ENCODE measurements at regions of chr19 and their contacts with region 1.

Region 1: GRCh38 chr19:48333467-48334384 is 8.4 kb downstream of the EMP3 start:
- DNase-seq: peak; percentile 97
- ATAC-seq: peak; percentile 76
- H3K4me3 Mint-ChIP-seq: peak overlapping the region; percentile 96
- H3K27ac Mint-ChIP-seq: peak overlapping the region; percentile 93
- H3K4me1 Mint-ChIP-seq: peaks cover 46% of the 10 kb centered on the region
- H3K27me3 Mint-ChIP-seq: no peaks in the 10 kb centered on the region

Region 2: DNA sequence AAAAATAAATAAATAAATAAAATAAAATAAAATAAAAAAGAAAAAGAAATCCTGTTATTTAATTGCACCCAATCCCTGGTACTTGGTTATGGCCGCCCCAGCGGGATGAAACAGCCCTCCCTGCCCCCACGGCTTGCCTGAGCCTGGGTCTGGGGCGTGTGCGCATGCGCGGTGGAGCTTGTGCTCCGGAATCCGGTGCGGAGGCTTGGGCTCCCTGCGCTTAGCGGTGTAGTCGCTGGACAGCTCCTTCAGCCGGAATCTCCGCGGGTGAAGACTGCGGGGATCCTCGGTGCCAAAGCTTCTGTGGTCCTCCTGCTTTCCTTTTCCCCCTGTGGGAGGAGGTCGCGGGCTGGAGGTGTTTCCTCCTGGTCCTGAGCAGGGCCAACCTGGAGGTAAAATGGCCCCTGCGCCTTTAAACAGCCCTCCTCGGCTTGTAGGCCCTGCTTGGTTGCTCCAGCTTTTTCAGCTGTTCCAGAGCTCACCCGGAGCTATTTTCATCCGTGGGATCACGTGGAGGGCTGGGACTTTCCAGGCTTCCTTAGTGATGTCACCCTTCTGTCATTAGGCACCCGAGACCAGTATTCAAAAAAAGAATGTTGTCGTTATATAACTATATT is 223.3 kb before region 1 on chr19 and contains the start of gene PLA2G4C:
- CTCF ChIA-PET with region 1: no interaction called
- DNase-seq: peak; percentile 87
- ATAC-seq: peak; percentile 92
- H3K4me3 Mint-ChIP-seq: peak within 1 kb of the TSS; percentile 64
- H3K27ac Mint-ChIP-seq: peak within 1 kb of the TSS; percentile 60
- H3K4me1 Mint-ChIP-seq: peaks cover 6% of the 10 kb centered on the region
- H3K27me3 Mint-ChIP-seq: no peaks in the 10 kb centered on the region
- total RNA-seq, gene PLA2G4C: 0.82 to 2.1 TPM

Region 3: DNA sequence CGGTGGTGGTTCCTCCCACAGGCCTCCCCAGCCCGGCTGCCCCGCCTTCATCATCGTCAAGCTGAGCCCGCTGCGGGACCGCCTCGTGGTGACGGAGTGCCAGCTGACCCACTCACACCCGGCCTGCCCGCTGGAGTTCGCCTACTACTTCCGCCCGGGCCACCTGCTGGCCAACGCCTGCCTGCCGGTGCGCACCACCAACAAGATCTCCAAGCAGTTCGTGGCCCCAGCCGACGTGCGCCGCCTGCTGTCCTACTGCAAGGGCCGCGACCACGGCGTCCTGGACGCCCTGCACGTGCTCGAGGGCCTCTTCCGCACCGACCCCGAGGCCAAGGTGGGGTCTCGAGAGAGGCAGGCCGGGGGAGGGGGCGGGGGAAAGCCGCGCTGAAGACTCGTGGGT is 151.3 kb before region 1 on chr19:
- CTCF ChIA-PET with region 1: no interaction called
- DNase-seq: no peak
- ATAC-seq: no peak
- H3K4me3 Mint-ChIP-seq: no peak overlapping the region
- H3K27ac Mint-ChIP-seq: no peak overlapping the region
- H3K4me1 Mint-ChIP-seq: no peaks in the 10 kb centered on the region
- H3K27me3 Mint-ChIP-seq: no peaks in the 10 kb centered on the region

Region 4: GRCh38 chr19:48255376-48256303 is 78.1 kb before region 1 on chr19 and contains the start of gene CARD8:
- CTCF ChIA-PET with region 1: interaction called, 16 read pairs
- DNase-seq: peak; percentile 95
- ATAC-seq: peak; percentile 76
- H3K4me3 Mint-ChIP-seq: peak within 1 kb of the TSS; percentile 97
- H3K27ac Mint-ChIP-seq: peak within 1 kb of the TSS; percentile 100
- H3K4me1 Mint-ChIP-seq: peaks cover 66% of the 10 kb centered on the region
- H3K27me3 Mint-ChIP-seq: no peaks in the 10 kb centered on the region
- total RNA-seq, gene CARD8: 182 to 219 TPM

Region 5: GRCh38 chr19:48296963-48297734 is 36.6 kb before region 1 on chr19:
- CTCF ChIA-PET with region 1: no interaction called
- DNase-seq: no peak
- ATAC-seq: no peak
- H3K4me3 Mint-ChIP-seq: no peak overlapping the region
- H3K27ac Mint-ChIP-seq: no peak overlapping the region
- H3K4me1 Mint-ChIP-seq: no peaks in the 10 kb centered on the region
- H3K27me3 Mint-ChIP-seq: no peaks in the 10 kb centered on the region

Region 6: DNA sequence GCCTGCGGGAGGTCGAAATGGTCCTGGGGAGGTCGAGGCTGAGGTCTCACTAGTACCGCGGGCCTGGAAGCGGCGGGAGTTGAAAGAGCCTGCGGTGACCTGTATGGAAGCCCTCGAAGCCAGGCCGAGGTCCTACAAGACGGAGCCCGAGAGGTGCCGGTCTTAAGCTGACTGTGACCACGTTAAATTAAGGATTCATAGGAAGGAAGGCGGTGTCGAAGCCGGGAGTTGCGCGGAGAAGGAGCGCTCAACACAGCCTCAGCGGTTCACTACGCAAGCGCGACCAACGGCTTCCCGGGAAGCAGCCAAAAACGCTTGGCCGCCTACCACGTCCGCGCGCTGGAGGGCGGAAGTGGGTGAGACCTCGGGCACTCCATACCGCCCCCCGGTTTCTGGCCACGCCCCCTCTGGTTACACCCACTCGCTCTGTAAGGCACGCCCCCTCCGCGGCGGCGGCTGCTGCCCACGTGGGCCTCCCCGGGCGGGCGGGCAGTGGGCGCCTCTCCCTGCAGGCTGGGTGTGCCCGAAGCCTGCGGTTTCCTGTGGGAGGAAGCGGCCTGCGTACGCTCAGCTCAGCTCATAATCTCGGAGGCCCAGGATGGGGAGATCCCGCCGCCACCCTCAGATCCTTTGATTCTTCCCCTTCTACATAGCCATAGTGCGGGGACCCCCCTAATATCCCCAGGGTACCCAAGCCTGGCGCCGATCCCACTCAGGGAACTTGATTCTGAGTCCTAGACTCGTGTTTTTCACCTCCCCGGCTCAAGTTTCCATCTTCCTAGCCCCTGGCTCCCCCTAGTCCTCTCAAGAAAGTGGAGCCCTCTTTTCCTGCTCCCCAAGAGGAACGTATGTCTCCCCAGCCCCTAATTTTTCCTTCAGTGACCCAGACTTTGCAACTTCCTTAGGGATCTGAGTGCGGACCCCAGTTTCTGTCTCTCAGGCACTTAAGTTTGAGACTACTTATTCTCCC is 11.8 kb before region 1 on chr19:
- CTCF ChIA-PET with region 1: interaction called, 390 read pairs
- DNase-seq: peak; percentile 99
- ATAC-seq: peak; percentile 66
- H3K4me3 Mint-ChIP-seq: peak overlapping the region; percentile 84
- H3K27ac Mint-ChIP-seq: peak overlapping the region; percentile 99
- H3K4me1 Mint-ChIP-seq: peaks cover 57% of the 10 kb centered on the region
- H3K27me3 Mint-ChIP-seq: no peaks in the 10 kb centered on the region

Region 7: GRCh38 chr19:48363810-48364563 is 30.3 kb after region 1 on chr19 and contains the starts of genes SYNGR4 and TMEM143:
- CTCF ChIA-PET with region 1: interaction called, 36 read pairs
- DNase-seq: peak; percentile 100
- ATAC-seq: peak; percentile 90
- H3K4me3 Mint-ChIP-seq: peak within 1 kb of the TSS; percentile 81
- H3K27ac Mint-ChIP-seq: peak within 1 kb of the TSS; percentile 92
- H3K4me1 Mint-ChIP-seq: peaks cover 16% of the 10 kb centered on the region
- H3K27me3 Mint-ChIP-seq: no peaks in the 10 kb centered on the region
- total RNA-seq, gene SYNGR4: not detected
- total RNA-seq, gene TMEM143: 16.7 to 22.3 TPM

Region 8: GRCh38 chr19:48468775-48469288 is 135.1 kb after region 1 on chr19:
- CTCF ChIA-PET with region 1: no interaction called
- DNase-seq: peak; percentile 100
- ATAC-seq: peak; percentile 94
- H3K4me3 Mint-ChIP-seq: peak overlapping the region; percentile 83
- H3K27ac Mint-ChIP-seq: peak overlapping the region; percentile 86
- H3K4me1 Mint-ChIP-seq: peaks cover 33% of the 10 kb centered on the region
- H3K27me3 Mint-ChIP-seq: no peaks in the 10 kb centered on the region

Measured in activated CD8-positive, alpha-beta memory T cell treated with anti-CD3 and anti-CD28 coated beads, Interleukin-2, amount 10 ng/mL, durations not matched to agents 7 days and 5 days (primary cell).